ENCODE measurements at regions of chr7 and their contacts with region 1.

Region 1: DNA sequence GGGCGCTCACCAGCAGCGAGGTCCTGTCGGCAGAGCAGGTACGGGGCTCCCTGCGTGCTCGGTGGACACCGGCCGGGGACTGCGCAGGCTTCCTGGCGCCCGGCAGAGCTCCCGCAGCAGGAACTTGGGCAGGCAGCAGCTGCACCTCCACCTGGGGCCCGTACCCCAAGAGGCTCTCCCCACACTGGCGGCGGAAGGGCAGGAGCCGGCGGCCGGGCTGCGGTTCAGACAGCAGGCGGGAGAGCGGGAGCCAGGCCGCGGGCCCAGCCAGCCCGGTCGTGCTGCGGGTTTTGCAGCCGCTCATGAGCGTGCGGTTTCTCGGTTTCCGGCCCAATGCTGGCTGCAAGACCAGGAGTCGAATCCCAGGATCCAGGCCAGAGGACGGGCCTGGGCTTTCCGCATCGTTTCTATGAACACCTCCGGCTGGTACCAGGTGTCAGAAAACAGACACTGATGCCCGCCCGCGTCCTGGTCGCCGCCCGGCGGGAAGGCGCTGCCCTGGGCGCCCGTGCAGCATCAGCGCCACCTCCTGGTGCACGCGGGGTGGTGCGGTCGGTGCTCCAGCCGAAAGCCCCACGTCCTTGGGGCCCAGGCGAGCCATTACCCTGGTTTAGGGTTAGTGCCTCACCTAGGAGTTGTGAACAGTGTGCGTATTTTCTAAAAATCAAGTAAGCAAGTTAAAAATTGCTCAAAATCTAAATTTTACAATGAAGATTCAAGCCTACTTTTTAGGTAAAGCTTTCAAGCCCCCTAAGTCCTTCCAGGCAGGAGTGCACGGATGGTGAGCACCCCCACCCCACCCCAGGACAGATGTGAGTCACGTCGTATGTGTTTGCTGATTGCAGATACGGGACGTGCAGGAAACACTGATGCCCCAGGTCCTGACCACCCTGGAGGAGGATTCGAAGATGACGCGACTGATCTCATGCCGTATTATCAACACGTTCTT is 47.4 kb upstream of the PRKAR1B start:
- DNase-seq: peak; percentile 73
- H3K4me3 ChIP-seq: no peak overlapping the region
- H3K27ac ChIP-seq: no peak overlapping the region
- H3K4me1 ChIP-seq: peaks cover 15 to 22% (median 20%) of the 10 kb centered on the region in 4 donors
- H3K27me3 ChIP-seq: no peaks in the 10 kb centered on the region
- CTCF ChIP-seq: peak; percentile 92 to 97 (median 94)
- EP300 ChIP-seq: no peak
- POLR2A ChIP-seq: no peak

Region 2: GRCh38 chr7:322111-322671 is 452.2 kb before region 1 on chr7:
- in situ Hi-C with region 1: loop called in 2 of 4 experiments (anchors 5 to 10 kb)
- intact Hi-C with region 1: loop called (anchors 2 kb)
- DNase-seq: peak; percentile 92
- H3K4me3 ChIP-seq: peak overlapping the region in 1 of 4 donors; percentile 19
- H3K27ac ChIP-seq: peak overlapping the region; percentile 87 to 89 (median 88)
- H3K4me1 ChIP-seq: peaks cover 12 to 69% (median 51%) of the 10 kb centered on the region in 4 donors
- H3K27me3 ChIP-seq: no peaks in the 10 kb centered on the region
- CTCF ChIP-seq: peak; percentile 89 to 97 (median 94)
- EP300 ChIP-seq: no peak
- POLR2A ChIP-seq: no peak

Region 3: DNA sequence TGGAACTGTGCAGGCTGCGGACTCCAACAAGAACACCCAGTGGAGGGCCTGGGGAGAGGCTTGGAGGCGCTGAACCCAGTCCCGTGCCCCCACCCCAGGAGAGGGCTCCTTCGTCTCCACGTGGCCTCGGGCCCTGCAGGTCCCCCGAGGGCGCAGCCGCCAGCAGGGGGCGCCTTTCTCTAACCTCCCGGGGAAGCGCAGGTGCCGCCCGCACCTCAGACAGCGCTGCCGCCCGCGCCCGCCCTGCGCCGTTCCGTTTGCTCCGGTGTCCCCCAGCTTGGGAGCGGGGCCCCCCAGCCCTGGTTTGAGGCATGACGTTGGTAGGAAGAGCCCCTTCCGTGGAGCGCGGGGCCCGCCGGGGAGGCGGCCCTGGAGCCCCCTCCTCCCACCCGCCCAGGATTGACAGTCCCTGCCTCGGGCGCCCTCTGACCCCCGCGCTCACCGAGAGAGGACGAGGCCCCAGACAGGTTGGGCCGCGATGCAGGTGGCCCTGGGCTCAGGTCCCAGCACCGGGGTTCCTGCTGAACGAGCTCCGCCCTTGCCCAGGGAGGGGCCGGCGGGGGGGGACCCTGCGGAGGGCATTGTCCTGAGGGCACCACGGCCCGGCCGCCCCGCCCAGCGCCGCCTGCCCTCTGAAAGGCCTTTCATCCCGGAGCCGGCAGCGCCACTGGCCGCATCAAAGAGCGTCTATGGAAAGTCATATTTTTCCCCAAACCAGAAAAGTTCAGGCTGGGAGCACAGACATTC is 441.6 kb before region 1 on chr7:
- in situ Hi-C with region 1: loop called in 1 of 4 experiments (anchors 10 kb)
- intact Hi-C with region 1: loop called (anchors 1 kb)
- DNase-seq: peak; percentile 90
- H3K4me3 ChIP-seq: peak overlapping the region; percentile 17 to 51 (median 30)
- H3K27ac ChIP-seq: peak overlapping the region; percentile 67 to 76 (median 72)
- H3K4me1 ChIP-seq: peaks cover 28 to 52% (median 42%) of the 10 kb centered on the region in 4 donors
- H3K27me3 ChIP-seq: no peaks in the 10 kb centered on the region
- CTCF ChIP-seq: peak; percentile 88 to 95 (median 90)
- EP300 ChIP-seq: peak; percentile 4
- POLR2A ChIP-seq: peak; percentile 13

Region 4: GRCh38 chr7:518630-519483 is 255.6 kb before region 1 on chr7:
- in situ Hi-C with region 1: no loop called
- intact Hi-C with region 1: loop called (anchors 10 kb)
- DNase-seq: peak; percentile 88
- H3K4me3 ChIP-seq: peak overlapping the region; percentile 77 to 90 (median 84)
- H3K27ac ChIP-seq: peak overlapping the region; percentile 95 to 98 (median 96)
- H3K4me1 ChIP-seq: peaks cover 38 to 67% (median 61%) of the 10 kb centered on the region in 4 donors
- H3K27me3 ChIP-seq: peaks cover 37% of the 10 kb centered on the region
- CTCF ChIP-seq: peak in 1 of 5 experiments; percentile 32
- EP300 ChIP-seq: no peak
- POLR2A ChIP-seq: peak; percentile 93

Region 5: GRCh38 chr7:683526-684205 is 90.8 kb before region 1 on chr7:
- in situ Hi-C with region 1: no loop called
- intact Hi-C with region 1: no loop called
- DNase-seq: no peak
- H3K4me3 ChIP-seq: no peak overlapping the region
- H3K27ac ChIP-seq: no peak overlapping the region
- H3K4me1 ChIP-seq: no peaks in the 10 kb centered on the region
- H3K27me3 ChIP-seq: no peaks in the 10 kb centered on the region
- CTCF ChIP-seq: no peak
- EP300 ChIP-seq: no peak
- POLR2A ChIP-seq: no peak

Region 6: DNA sequence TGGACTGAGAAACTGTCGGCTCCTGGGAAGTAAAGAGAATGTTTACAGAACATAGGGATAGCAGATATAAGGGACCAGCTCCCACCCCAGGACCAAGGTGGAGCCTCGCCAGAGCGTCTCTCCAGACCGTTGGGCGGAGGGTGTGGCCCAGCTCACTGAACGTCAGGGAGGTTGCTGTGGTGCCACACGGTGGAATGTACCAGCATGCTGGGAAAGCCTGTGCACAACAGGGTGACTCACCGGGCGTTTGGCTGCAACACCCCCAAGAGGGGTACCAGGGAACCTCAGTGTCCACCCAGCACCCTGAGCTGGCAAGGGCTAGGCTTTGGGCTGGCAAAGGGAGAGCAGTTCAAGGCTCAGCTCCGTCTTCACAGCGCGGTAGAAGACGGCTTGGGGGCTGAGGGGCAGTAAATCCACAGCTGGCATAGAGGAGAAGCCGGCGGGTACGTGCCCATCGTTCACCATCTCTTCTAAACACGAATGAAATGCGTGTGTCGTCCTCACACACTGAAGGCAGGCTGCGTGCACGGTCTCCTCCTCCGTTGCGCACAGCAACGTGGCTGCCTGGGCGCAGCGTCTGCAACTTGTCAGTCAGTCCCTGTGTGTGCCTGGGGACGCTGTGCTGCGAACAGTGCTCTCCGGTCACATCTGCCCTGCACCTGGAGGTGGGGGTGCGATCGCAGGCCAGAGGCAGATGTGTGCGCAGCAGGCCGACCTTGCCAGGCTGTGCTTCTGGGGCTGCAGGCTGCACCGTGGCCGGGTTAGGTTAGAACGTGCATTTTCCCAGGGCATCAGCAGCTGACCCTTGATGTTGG is 93.4 kb after region 1 on chr7:
- in situ Hi-C with region 1: no loop called
- intact Hi-C with region 1: no loop called
- DNase-seq: peak; percentile 88
- H3K4me3 ChIP-seq: no peak overlapping the region
- H3K27ac ChIP-seq: peak overlapping the region; percentile 74 to 91 (median 84)
- H3K4me1 ChIP-seq: peaks cover 13 to 25% (median 16%) of the 10 kb centered on the region in 4 donors
- H3K27me3 ChIP-seq: no peaks in the 10 kb centered on the region
- CTCF ChIP-seq: no peak
- EP300 ChIP-seq: peak; percentile 47
- POLR2A ChIP-seq: no peak